ENCODE measurements at regions of chr16 and their contacts with region 1.

Region 1: DNA sequence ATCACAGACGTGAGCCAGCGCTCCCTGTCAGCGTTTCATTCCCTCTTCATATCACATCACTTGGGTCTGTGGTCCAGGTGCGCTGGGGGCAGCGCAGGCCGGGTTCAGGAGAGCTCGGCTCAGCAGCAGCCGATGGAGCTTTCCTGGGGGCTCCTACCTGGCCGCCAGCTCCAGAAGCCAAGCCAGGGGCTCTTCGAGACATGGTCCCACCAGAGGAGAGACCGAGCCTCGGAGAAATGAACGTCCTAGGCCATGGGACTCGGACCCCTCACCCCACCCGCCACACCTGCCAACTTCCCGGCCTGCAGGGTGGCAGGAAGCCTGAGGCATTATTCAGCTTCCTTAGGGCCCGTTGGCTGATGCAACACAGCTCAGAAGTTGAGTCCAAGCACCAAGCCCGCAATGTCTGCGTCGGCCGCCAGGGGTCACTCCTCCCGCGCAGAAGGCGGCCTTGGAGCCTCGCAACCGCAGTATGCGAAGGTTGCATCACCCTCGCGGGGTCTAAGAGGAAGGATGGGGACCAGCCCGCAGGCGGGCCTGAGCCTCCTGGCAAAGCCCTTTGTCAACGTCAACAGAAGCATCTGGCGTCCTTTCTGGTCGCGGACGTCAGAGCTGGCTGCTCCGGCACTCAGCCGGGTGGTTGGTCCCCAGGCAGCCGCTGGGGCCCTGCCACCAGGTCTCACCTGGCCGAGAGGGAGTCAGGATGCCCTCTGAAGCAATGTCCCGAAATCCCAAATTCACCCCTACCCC is 13.2 kb upstream of the KLHDC4 start:
- DNase-seq: peak; percentile 97
- H3K4me3 Mint-ChIP-seq: peak overlapping the region; percentile 69
- H3K27ac Mint-ChIP-seq: peak overlapping the region; percentile 97
- H3K4me1 Mint-ChIP-seq: peaks cover 61% of the 10 kb centered on the region
- H3K27me3 Mint-ChIP-seq: no peaks in the 10 kb centered on the region

Region 2: GRCh38 chr16:87790278-87791032 is 11.4 kb after region 1 on chr16:
- CTCF ChIA-PET with region 1: interaction called, 13 read pairs
- POLR2A ChIA-PET with region 1: interaction called, 4 read pairs
- DNase-seq: no peak
- H3K4me3 Mint-ChIP-seq: no peak overlapping the region
- H3K27ac Mint-ChIP-seq: no peak overlapping the region
- H3K4me1 Mint-ChIP-seq: peaks cover 2% of the 10 kb centered on the region
- H3K27me3 Mint-ChIP-seq: peaks cover 2% of the 10 kb centered on the region

Region 3: GRCh38 chr16:87844120-87844733 is 65.2 kb after region 1 on chr16:
- CTCF ChIA-PET with region 1: interaction called, 102 read pairs
- POLR2A ChIA-PET with region 1: interaction called, 20 read pairs
- DNase-seq: no peak
- H3K4me3 Mint-ChIP-seq: no peak overlapping the region
- H3K27ac Mint-ChIP-seq: no peak overlapping the region
- H3K4me1 Mint-ChIP-seq: peaks cover 3% of the 10 kb centered on the region
- H3K27me3 Mint-ChIP-seq: no peaks in the 10 kb centered on the region

Region 4: DNA sequence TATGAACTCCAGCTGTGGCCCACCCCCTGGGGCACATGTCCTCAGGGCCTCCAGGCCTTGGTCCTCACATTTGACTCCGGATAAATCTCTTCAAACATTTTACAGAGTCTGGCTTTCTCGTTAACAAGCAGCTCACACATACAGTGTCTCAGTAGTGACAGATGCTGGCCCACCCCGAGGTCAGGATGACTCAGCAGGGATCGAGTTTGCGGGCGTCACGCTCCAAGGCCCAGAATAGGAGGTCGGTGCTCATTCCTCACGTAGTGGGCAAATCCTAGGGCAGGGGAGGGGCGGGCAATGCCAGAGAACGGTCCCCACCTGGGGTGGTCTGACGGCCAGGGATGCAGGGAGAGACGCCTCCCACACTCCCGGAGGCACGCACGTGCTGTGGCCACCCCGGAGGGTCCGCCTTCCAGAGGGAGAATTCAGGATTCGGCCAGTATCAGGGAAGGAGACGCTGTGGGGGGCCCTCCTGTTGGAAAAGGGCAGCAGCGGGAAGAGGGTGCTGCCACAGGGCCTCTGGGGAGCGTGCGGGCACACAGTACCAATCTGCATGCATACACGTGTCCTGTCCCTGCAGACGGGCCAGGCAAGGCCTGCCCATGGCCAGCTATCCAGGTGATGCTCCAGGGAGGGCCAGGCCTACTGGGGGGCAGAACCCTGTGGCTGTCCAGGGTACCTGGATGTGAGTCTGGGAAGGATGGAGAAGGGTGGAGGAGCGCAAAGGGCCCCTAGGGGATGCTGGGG is 81.7 kb after region 1 on chr16:
- CTCF ChIA-PET with region 1: interaction called, 454 read pairs
- POLR2A ChIA-PET with region 1: interaction called, 187 read pairs
- DNase-seq: no peak
- H3K4me3 Mint-ChIP-seq: peak overlapping the region; percentile 56
- H3K27ac Mint-ChIP-seq: peak overlapping the region; percentile 83
- H3K4me1 Mint-ChIP-seq: peaks cover 87% of the 10 kb centered on the region
- H3K27me3 Mint-ChIP-seq: no peaks in the 10 kb centered on the region

Region 5: DNA sequence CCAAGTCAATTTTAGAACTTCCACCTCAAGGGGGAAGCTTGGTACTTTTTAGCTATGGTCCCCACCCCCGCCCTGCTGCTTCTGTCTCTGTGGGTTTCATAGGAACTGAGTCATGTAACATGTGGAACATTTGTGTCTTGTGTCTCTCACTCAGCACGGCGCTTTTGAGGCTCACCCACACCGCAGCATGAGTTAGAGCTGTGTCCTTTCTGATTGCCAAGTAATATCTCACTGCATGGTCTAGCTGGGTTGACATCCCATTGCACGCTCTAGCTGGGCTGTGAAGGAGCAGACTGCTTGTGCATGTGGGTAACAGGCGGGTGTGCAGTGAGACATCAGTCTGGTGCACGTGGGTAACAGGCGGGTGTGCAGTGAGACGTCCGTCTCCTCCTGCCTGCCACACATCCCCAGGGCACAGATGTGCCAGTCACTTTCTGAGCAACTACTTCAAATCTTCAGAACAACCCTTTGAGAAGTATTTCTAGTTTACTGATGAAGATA is 116.7 kb after region 1 on chr16:
- CTCF ChIA-PET with region 1: interaction called, 61 read pairs
- POLR2A ChIA-PET with region 1: interaction called, 32 read pairs
- DNase-seq: peak; percentile 93
- H3K4me3 Mint-ChIP-seq: peak overlapping the region; percentile 54
- H3K27ac Mint-ChIP-seq: peak overlapping the region; percentile 100
- H3K4me1 Mint-ChIP-seq: peaks cover 56% of the 10 kb centered on the region
- H3K27me3 Mint-ChIP-seq: no peaks in the 10 kb centered on the region

Region 6: GRCh38 chr16:87950765-87951549 is 172.0 kb after region 1 on chr16 and contains the start of gene BANP:
- CTCF ChIA-PET with region 1: interaction called, 15 read pairs
- POLR2A ChIA-PET with region 1: interaction called, 12 read pairs
- DNase-seq: peak; percentile 97
- H3K4me3 Mint-ChIP-seq: peak within 1 kb of the TSS; percentile 98
- H3K27ac Mint-ChIP-seq: peak within 1 kb of the TSS; percentile 99
- H3K4me1 Mint-ChIP-seq: peaks cover 66% of the 10 kb centered on the region
- H3K27me3 Mint-ChIP-seq: no peaks in the 10 kb centered on the region
- total RNA-seq, gene BANP: 33.6 to 38.9 TPM